ENCODE measurements at regions of chr17 and their contacts with region 1.

Region 1: GRCh38 chr17:74466111-74466827 is at the start of gene CD300A:
- DNase-seq: peak; percentile 91
- total RNA-seq, gene CD300A: 2.6 TPM

Region 2: DNA sequence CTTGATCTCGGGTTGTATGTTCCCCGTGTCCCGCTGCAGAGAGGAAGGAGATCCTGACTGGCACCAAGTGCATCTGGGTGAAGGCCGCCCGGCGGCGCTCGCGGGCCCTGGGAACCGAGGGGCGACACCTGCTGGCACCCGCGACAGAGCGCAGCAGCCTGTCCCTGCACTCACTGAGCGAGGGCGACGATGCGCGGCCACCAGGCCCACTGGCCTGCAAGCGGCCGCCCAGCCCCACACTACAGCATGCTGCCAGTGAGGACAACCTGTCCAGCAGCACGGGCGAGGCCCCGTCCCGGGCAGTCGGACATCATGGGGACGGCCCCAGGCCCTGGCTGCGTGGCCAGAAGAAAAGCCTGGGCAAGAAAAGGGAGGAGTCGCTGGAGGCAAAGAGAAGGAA is 112.1 kb before region 1 on chr17:
- intact Hi-C with region 1: no loop called
- DNase-seq: no peak

Region 3: GRCh38 chr17:74485022-74485743 is 18.9 kb after region 1 on chr17:
- intact Hi-C with region 1: loop called (anchors 1 kb)
- DNase-seq: no peak